SK-N-SH (cell line): ENCODE measurements at regions of chr7 and their contacts with region 1.

Region 1: DNA sequence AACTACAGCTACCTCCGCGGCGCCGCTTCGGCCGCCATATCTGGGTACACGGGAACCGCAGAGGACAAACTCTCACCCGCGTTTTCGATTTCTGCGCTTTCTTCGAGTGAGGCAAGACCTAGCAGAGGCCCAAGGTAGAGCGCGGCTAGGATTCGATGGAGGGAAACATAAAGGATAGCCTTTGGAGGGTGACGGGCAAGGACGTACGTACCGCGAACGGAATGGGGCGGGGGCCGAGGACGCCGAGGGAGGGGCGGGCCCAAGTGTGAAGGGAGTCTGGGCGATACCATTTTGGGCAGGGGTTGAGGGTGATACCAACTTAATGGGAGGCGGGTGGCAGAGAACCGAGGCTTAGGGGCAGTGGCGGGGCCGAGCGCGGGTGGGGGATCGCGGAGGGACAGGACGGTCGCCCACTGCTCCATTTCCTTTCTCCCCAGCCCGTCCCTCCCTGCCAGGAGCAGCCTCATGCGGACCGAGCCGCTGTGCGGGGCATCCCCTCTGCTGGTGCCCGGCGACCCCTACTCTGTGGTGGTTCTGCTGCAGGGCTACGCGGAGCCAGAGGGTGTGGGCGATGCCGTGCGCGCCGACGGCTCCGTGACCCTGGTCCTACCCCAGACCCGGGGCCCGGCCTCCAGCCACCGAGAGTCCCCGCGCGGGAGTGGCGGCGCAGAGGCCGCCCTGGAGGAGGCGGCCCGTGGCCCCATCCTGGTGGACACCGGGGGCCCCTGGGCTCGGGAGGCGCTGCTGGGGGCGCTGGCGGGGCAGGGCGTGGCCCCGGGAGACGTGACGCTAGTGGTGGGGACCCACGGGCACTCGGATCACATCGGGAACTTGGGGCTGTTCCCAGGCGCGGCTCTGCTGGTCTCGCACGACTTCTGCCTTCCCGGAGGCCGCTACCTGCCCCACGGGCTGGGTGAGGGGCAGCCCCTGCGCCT is at the start of gene MBLAC1:
- DNase-seq: peak; percentile 99
- H3K4me3 ChIP-seq: peak within 1 kb of the TSS; percentile 65 to 84
- H3K27ac ChIP-seq: peak within 1 kb of the TSS; percentile 96 to 97
- H3K4me1 ChIP-seq: peaks cover 6 to 20% of the 10 kb centered on the region in 2 experiments; a peak in 2 of 4 replicates
- H3K27me3 ChIP-seq: no peaks in the 10 kb centered on the region
- CTCF ChIP-seq: no peak
- EP300 ChIP-seq: peak in 1 of 2 experiments; percentile 51; a peak in 1 of 4 replicates
- RAD21 ChIP-seq: no peak
- polyA plus RNA-seq, gene MBLAC1: 2.5 and 4.4 TPM in 2 replicates

Region 2: GRCh38 chr7:99949638-99950228 is 177.5 kb before region 1 on chr7:
- CTCF ChIA-PET with region 1: no interaction called
- POLR2A ChIA-PET with region 1: no interaction called
- DNase-seq: no peak
- H3K4me3 ChIP-seq: no peak overlapping the region
- H3K27ac ChIP-seq: no peak overlapping the region
- H3K4me1 ChIP-seq: no peaks in the 10 kb centered on the region
- H3K27me3 ChIP-seq: peaks cover 26% of the 10 kb centered on the region; the same call in 1 of the 2 replicates
- CTCF ChIP-seq: peak; percentile 57
- EP300 ChIP-seq: no peak
- RAD21 ChIP-seq: peak; percentile 52

Region 3: GRCh38 chr7:100208911-100209408 is 81.8 kb after region 1 on chr7:
- CTCF ChIA-PET with region 1: interaction called, 262 read pairs
- POLR2A ChIA-PET with region 1: no interaction called
- DNase-seq: no peak
- H3K4me3 ChIP-seq: no peak overlapping the region
- H3K27ac ChIP-seq: no peak overlapping the region
- H3K4me1 ChIP-seq: no peaks in the 10 kb centered on the region
- H3K27me3 ChIP-seq: no peaks in the 10 kb centered on the region
- CTCF ChIP-seq: no peak
- EP300 ChIP-seq: no peak
- RAD21 ChIP-seq: no peak